Vagina (tissue), 2 donors: ENCODE measurements at regions of chr15 and their contacts with region 1.

Region 1: GRCh38 chr15:93170329-93170728 is 81.3 kb upstream of the RGMA start:
- DNase-seq: no peak
- H3K4me3 ChIP-seq: no peak overlapping the region
- H3K27ac ChIP-seq: no peak overlapping the region
- H3K4me1 ChIP-seq: no peaks in the 10 kb centered on the region
- H3K27me3 ChIP-seq: no peaks in the 10 kb centered on the region
- CTCF ChIP-seq: no peak
- POLR2A ChIP-seq: no peak

Region 2: DNA sequence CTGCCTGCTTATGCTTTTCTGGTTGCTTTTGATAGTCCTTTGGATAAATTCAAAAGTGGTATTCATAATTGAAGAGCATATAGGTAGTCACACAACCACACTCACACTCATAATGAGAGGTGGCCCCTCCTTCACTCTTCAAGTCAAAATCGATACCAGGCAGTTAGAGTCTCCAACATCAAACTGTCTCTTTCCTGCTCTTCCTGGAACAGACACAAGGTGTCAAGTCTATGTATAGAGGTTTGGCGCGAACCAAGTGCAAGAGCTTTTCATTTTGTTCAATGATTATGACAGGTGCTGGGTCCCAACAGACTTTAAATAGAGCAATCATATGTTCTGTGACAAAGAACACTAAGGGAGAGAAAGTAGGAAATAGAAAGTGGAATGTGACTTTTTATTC is 51.4 kb before region 1 on chr15:
- intact Hi-C with region 1: no loop called
- DNase-seq: no peak
- H3K4me3 ChIP-seq: no peak overlapping the region
- H3K27ac ChIP-seq: no peak overlapping the region
- H3K4me1 ChIP-seq: no peaks in the 10 kb centered on the region
- H3K27me3 ChIP-seq: no peaks in the 10 kb centered on the region
- CTCF ChIP-seq: no peak
- POLR2A ChIP-seq: no peak

Region 3: GRCh38 chr15:93129702-93130488 is 40.4 kb before region 1 on chr15:
- intact Hi-C with region 1: no loop called
- DNase-seq: no peak
- H3K4me3 ChIP-seq: no peak overlapping the region
- H3K27ac ChIP-seq: no peak overlapping the region
- H3K4me1 ChIP-seq: no peaks in the 10 kb centered on the region
- H3K27me3 ChIP-seq: no peaks in the 10 kb centered on the region
- CTCF ChIP-seq: no peak
- POLR2A ChIP-seq: no peak

Region 4: DNA sequence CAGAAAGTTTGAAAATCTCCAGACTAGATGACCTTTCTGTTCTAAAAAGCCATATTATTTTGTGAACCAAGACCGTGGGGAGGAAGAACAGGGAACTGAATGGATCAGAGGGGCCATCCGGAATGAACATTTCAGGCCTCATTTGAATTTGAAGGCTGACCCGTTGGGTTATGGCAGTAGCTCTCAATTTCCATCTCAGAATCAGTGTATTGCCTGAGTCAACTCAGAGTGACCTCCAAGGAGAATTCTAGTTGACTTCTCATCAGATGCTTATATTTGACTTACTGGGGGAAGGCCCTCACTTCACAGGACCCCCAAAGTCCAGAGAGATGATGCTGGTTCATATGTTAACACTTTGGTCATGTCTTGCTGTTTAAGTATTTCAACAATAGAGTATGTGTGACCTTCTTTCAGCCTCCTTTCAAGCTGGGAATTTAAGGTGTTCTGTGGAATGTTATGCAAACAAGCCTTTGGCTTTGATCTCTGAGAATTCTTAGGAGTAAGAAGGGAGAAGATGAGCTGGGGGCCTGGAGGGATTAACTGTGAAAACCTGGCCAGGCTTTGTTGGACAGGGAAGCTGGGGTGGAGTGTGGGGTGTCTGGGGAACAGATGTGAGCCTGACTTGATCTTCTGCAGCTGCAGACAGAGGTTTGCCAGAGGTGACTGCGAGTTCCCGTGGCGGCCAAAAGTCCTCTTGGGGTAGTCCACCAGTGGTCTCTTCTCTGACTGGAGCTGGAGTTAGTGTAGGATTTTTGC is 29.9 kb after region 1 on chr15:
- intact Hi-C with region 1: loop called (anchors 1 kb)
- DNase-seq: peak in 1 of 2 donors; percentile 74
- H3K4me3 ChIP-seq: no peak overlapping the region
- H3K27ac ChIP-seq: no peak overlapping the region
- H3K4me1 ChIP-seq: no peaks in the 10 kb centered on the region
- H3K27me3 ChIP-seq: no peaks in the 10 kb centered on the region
- CTCF ChIP-seq: no peak
- POLR2A ChIP-seq: no peak

Region 5: DNA sequence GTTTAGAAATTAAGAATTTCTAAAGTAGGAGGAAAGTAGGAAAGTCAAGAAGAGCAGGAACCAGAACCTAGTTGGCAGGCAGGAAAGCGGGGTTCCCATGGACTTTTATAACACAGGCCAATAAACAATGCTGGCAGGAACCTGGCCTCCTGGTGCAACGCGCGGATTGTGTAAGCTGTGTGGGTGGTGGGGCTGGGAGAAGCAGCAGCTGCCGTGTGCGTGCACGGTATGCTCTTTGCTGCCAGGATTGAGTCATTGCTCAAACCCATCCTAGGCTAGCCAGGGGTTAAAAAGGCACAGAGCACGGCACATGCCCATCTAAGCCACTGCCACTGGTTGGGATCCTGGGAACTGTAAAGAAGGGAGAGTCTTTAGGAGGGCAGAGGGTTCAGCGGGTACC is 128.6 kb after region 1 on chr15:
- intact Hi-C with region 1: no loop called
- DNase-seq: peak in 1 of 2 donors; percentile 81
- H3K4me3 ChIP-seq: no peak overlapping the region
- H3K27ac ChIP-seq: no peak overlapping the region
- H3K4me1 ChIP-seq: no peaks in the 10 kb centered on the region
- H3K27me3 ChIP-seq: no peaks in the 10 kb centered on the region
- CTCF ChIP-seq: no peak
- POLR2A ChIP-seq: no peak

Region 6: DNA sequence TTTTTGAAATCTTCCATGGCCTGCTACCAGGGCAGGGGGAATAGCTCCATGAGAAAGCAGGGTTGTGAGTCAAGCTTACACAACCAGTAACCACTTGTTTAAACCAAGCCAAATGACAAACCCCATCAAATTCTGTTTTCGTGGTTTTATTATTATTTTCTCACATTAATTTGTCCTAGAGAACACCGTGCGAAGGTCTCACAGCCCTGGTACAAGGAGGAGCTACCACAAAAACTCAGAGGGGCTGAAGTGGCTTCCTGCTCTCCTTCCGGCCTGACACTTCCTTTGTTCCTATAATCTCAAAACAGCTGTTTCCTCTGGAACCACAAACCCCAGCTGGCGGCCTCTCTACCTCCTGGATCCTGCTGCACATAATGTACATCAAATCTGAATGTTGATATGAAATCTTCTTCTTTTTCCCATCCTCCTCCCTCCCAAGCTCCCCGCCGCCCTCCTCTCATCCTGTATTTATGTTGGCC is 1436.9 kb after region 1 on chr15:
- intact Hi-C with region 1: no loop called
- DNase-seq: no peak
- H3K4me3 ChIP-seq: no peak overlapping the region
- H3K27ac ChIP-seq: no peak overlapping the region
- H3K4me1 ChIP-seq: no peaks in the 10 kb centered on the region
- H3K27me3 ChIP-seq: no peaks in the 10 kb centered on the region
- CTCF ChIP-seq: no peak
- POLR2A ChIP-seq: no peak